ENCODE measurements at regions of chr9 and their contacts with region 1.

Region 1: DNA sequence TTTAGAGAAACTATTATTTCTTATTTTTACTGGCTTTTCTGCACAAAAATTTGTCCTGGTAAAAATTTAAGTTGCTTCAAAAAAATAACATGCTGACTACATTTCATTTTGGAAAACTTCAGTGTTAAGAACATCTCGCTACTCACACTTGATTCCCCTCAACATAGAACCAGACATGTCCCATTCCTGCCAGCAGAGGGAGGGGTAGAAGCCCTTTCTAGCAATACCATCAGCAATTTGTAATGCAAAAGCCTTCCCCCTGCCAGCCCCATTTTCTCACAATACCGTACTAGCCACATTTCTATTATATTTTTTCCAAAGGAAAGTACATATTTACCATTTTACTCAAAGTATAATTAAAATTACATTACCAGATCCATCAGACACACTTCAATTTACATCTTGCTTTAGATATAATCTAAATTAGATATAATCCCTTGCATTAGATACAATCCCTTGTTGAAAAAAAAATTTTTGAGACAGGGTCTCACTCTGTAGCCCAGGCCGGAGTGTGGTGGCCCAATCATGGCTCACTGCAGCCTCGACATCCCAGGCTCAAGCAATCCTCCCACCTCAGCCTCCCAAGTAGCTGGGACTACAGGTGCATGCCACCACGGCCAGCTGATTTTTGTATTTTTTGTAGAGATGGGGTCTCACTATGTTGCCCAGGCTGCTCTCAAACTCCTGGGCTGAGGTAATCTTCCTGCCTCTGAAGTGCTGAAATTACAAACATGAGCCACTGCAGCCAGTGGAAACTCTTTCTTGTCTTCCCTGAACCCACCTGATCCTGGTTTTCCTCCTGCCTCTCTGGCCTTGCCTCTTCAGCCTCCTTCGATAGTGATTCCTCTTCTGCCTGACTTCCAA is 39.6 kb upstream of the IDNK start:
- DNase-seq: peak; percentile 50
- H3K4me3 Mint-ChIP-seq: no peak overlapping the region
- H3K27ac Mint-ChIP-seq: no peak overlapping the region
- H3K4me1 Mint-ChIP-seq: peaks cover 9% of the 10 kb centered on the region
- H3K27me3 Mint-ChIP-seq: no peaks in the 10 kb centered on the region

Region 2: DNA sequence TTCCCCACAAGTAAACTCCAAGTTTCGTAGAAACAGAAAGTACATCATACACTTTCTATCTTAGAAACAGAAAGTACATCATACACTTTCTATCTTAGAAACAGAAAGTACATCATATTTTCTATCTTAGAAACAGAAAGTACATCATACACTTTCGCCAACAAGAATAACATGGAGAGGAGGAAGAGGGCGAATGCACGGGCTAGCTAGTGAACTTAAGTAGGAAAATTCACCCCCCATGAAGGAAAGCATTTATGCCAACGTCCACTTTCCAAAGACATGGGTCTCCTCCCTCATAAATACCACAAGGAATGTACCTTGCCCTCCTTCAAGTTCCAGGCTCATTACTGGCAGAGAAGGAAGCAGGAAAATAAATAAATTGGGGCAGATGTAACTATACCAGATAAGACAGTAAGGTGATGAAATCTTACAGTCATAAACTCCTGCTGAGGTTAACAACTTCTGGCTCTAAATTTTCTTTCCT is 109.9 kb before region 1 on chr9:
- CTCF ChIA-PET with region 1: interaction called, 3 read pairs
- intact Hi-C with region 1: loop called (anchors 5 kb)
- DNase-seq: no peak
- H3K4me3 Mint-ChIP-seq: peak overlapping the region; percentile 35
- H3K27ac Mint-ChIP-seq: peak overlapping the region; percentile 46
- H3K4me1 Mint-ChIP-seq: peaks cover 28% of the 10 kb centered on the region
- H3K27me3 Mint-ChIP-seq: no peaks in the 10 kb centered on the region

Region 3: DNA sequence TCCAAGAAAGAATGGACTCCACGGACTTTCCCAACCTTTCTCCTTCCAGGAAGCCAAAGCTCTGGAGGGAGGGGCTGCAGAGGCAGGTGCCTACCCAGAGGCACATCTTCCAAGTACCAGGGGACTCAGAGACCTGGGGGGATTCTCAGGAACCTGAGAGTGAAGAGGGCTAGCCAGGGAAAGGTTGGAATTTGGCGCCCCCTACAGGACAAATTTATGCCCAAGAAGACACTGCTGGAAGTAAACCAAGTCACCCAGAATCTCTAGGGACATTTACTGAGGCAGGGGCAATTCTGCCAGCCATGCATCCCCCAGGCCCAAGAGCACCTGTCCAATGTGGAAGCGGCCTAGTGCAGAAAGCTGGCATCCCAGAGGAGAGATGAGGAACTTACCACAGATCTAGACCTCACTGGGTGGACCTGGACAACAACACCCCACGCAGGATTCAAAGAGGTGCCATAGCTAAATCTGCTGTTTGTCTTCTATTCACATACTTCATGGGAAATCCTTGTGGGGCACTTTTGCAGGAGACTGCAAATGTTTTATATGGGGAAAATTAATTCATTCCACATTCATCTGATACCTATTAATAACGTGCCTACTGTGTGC is 13.6 kb after region 1 on chr9:
- CTCF ChIA-PET with region 1: interaction called, 3 read pairs
- intact Hi-C with region 1: loop called (anchors 2 kb)
- DNase-seq: peak; percentile 69
- H3K4me3 Mint-ChIP-seq: no peak overlapping the region
- H3K27ac Mint-ChIP-seq: no peak overlapping the region
- H3K4me1 Mint-ChIP-seq: no peaks in the 10 kb centered on the region
- H3K27me3 Mint-ChIP-seq: no peaks in the 10 kb centered on the region

Region 4: GRCh38 chr9:84368601-84369000 is 785.2 kb after region 1 on chr9:
- CTCF ChIA-PET with region 1: no interaction called
- intact Hi-C with region 1: no loop called
- DNase-seq: no peak
- H3K4me3 Mint-ChIP-seq: no peak overlapping the region
- H3K27ac Mint-ChIP-seq: no peak overlapping the region
- H3K4me1 Mint-ChIP-seq: no peaks in the 10 kb centered on the region
- H3K27me3 Mint-ChIP-seq: peaks cover 5% of the 10 kb centered on the region